Right ventricle myocardium inferior (tissue), 1 donor: ENCODE measurements at regions of chr13 and their contacts with region 1.

Region 1: GRCh38 chr13:40777166-40777808 is 6.3 kb upstream of the MRPS31 start:
- DNase-seq: no peak
- ATAC-seq: peak; percentile 82

Region 2: GRCh38 chr13:39684531-39685137 is 1092.7 kb before region 1 on chr13:
- intact Hi-C with region 1: loop called (anchors 2 kb)
- DNase-seq: no peak
- ATAC-seq: no peak

Region 3: DNA sequence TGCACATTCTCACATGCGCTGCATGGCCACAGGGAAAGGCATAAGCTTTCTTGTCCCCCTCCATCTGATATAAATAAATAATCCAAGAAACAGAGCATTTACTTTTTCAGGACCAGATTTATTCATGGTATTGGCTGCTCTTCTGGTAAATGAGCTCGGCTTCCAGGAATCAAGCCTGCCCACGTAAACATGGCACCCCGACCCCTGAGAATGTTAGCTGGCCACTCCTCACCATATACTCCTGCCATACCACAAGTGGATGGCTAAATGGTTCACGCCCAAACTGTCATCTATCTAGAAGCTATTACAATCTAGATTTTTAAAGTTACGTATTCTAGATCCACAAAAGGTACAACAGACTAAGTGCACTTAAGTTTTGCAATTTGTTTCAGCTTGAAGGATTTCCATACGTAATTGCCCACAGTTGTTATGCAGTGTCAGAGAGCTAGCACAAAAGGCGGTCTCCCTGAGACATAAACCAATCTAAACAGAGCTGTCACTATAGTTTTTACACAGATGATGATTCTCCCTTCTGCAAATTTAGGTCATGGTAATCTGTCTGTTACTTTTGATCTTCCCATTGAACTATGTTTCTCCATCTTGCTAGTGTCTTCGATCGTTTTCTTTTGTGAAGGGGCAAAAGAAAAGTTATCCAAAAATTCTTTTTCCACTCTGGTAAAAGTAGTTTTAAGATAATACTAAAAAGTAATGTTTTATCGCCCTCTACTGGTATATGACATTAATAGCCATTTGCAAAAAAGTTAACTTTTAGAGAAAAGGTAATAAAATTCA is 94.6 kb before region 1 on chr13:
- intact Hi-C with region 1: no loop called
- DNase-seq: no peak
- ATAC-seq: no peak

Region 4: GRCh38 chr13:40922437-40923040 is 145.3 kb after region 1 on chr13:
- intact Hi-C with region 1: no loop called
- DNase-seq: peak; percentile 64
- ATAC-seq: no peak